CD4-positive, alpha-beta T cell (primary cell): ENCODE measurements at regions of chr3 and their contacts with region 1.

Region 1: DNA sequence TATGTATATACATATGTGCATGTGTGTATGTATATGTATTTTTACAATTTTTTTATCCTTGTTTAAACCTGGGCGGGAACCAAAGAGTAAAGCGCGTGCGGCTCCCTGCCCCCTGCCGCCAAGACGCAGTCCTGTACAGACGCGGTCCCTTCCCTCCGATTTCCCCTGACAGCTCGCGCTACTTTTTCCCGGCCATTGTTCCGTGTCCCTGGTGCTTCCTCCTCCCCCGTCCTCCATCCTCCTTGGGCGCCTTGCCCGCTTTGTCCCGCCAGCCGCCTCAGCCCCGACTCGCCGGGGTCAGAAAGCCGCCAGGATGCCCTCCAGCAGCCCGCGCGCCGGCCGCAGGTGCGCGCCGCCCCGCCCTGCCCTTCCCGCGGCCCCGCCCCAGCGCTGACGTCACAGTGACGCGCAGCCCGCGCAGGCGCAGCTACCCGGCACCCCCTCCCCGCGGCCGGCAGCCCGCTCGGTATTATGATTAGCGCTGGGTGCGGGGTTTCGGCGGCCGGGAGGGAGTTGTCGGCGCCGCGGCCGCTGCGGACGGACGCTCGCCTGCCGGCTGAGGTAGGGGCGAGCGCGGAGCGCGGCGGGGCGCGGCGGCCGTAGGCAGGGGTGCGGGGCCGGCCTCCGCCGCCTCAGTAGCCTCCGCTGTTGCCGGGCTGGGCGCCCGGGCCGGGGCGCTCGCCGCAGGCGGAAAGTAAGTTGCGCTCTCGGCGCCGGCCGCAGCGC is at the start of gene SNRK:
- DNase-seq: peak; percentile 84 to 97 (median 92)
- ATAC-seq: peak; percentile 79
- H3K4me3 ChIP-seq: peak within 1 kb of the TSS; percentile 70
- H3K4me3 Mint-ChIP-seq: peak within 1 kb of the TSS; percentile 100
- H3K27ac ChIP-seq: peak within 1 kb of the TSS; percentile 77 to 81
- H3K27ac Mint-ChIP-seq: peak within 1 kb of the TSS; percentile 100
- H3K4me1 ChIP-seq: peaks cover 32% of the 10 kb centered on the region
- H3K4me1 Mint-ChIP-seq: peaks cover 37% of the 10 kb centered on the region
- H3K27me3 ChIP-seq: no peaks in the 10 kb centered on the region
- H3K27me3 Mint-ChIP-seq: peaks cover 4% of the 10 kb centered on the region
- CTCF ChIP-seq: peak; percentile 56
- total RNA-seq, gene SNRK: 215 to 217 TPM

Region 2: GRCh38 chr3:42214565-42215283 is 1071.6 kb before region 1 on chr3:
- CTCF ChIA-PET with region 1: no interaction called
- POLR2A ChIA-PET with region 1: no interaction called
- intact Hi-C with region 1: no loop called
- DNase-seq: no peak
- ATAC-seq: no peak
- H3K4me3 ChIP-seq: no peak overlapping the region
- H3K4me3 Mint-ChIP-seq: peak overlapping the region; percentile 47
- H3K27ac ChIP-seq: peak overlapping the region; percentile 25 to 44
- H3K27ac Mint-ChIP-seq: peak overlapping the region; percentile 65
- H3K4me1 ChIP-seq: peaks cover 46% of the 10 kb centered on the region
- H3K4me1 Mint-ChIP-seq: peaks cover 62% of the 10 kb centered on the region
- H3K27me3 ChIP-seq: no peaks in the 10 kb centered on the region
- H3K27me3 Mint-ChIP-seq: no peaks in the 10 kb centered on the region
- CTCF ChIP-seq: no peak

Region 3: GRCh38 chr3:42855547-42856380 is 430.5 kb before region 1 on chr3:
- CTCF ChIA-PET with region 1: no interaction called
- POLR2A ChIA-PET with region 1: no interaction called
- intact Hi-C with region 1: no loop called
- DNase-seq: no peak
- ATAC-seq: no peak
- H3K4me3 ChIP-seq: no peak overlapping the region
- H3K4me3 Mint-ChIP-seq: no peak overlapping the region
- H3K27ac ChIP-seq: no peak overlapping the region
- H3K27ac Mint-ChIP-seq: no peak overlapping the region
- H3K4me1 ChIP-seq: no peaks in the 10 kb centered on the region
- H3K4me1 Mint-ChIP-seq: no peaks in the 10 kb centered on the region
- H3K27me3 ChIP-seq: no peaks in the 10 kb centered on the region
- H3K27me3 Mint-ChIP-seq: peaks cover 19% of the 10 kb centered on the region
- CTCF ChIP-seq: no peak

Region 4: GRCh38 chr3:42914771-42915515 is 371.3 kb before region 1 on chr3:
- CTCF ChIA-PET with region 1: no interaction called
- POLR2A ChIA-PET with region 1: no interaction called
- intact Hi-C with region 1: no loop called
- DNase-seq: no peak
- ATAC-seq: no peak
- H3K4me3 ChIP-seq: no peak overlapping the region
- H3K4me3 Mint-ChIP-seq: no peak overlapping the region
- H3K27ac ChIP-seq: no peak overlapping the region
- H3K27ac Mint-ChIP-seq: no peak overlapping the region
- H3K4me1 ChIP-seq: no peaks in the 10 kb centered on the region
- H3K4me1 Mint-ChIP-seq: no peaks in the 10 kb centered on the region
- H3K27me3 ChIP-seq: no peaks in the 10 kb centered on the region
- H3K27me3 Mint-ChIP-seq: no peaks in the 10 kb centered on the region
- CTCF ChIP-seq: no peak

Region 5: GRCh38 chr3:43180027-43180426 is 106.3 kb before region 1 on chr3:
- CTCF ChIA-PET with region 1: no interaction called
- POLR2A ChIA-PET with region 1: interaction called, 11 read pairs
- intact Hi-C with region 1: loop called in 1 of 2 experiments (anchors 5 kb)
- DNase-seq: peak in 11 of 14 experiments; percentile 14 to 87 (median 35)
- ATAC-seq: peak; percentile 86
- H3K4me3 ChIP-seq: peak overlapping the region; percentile 7
- H3K4me3 Mint-ChIP-seq: peak overlapping the region; percentile 71
- H3K27ac ChIP-seq: peak overlapping the region; percentile 49 to 77
- H3K27ac Mint-ChIP-seq: peak overlapping the region; percentile 91
- H3K4me1 ChIP-seq: peaks cover 54% of the 10 kb centered on the region
- H3K4me1 Mint-ChIP-seq: peaks cover 67% of the 10 kb centered on the region
- H3K27me3 ChIP-seq: no peaks in the 10 kb centered on the region
- H3K27me3 Mint-ChIP-seq: no peaks in the 10 kb centered on the region
- CTCF ChIP-seq: no peak

Region 6: GRCh38 chr3:43246976-43247375 is 39.3 kb before region 1 on chr3:
- CTCF ChIA-PET with region 1: no interaction called
- POLR2A ChIA-PET with region 1: interaction called, 8 read pairs
- intact Hi-C with region 1: loop called in 1 of 2 experiments (anchors 5 kb)
- DNase-seq: peak in 6 of 14 experiments; percentile 5 to 62 (median 23)
- ATAC-seq: peak; percentile 82
- H3K4me3 ChIP-seq: no peak overlapping the region
- H3K4me3 Mint-ChIP-seq: no peak overlapping the region
- H3K27ac ChIP-seq: peak overlapping the region; percentile 2 to 39
- H3K27ac Mint-ChIP-seq: peak overlapping the region; percentile 18
- H3K4me1 ChIP-seq: peaks cover 46% of the 10 kb centered on the region
- H3K4me1 Mint-ChIP-seq: peaks cover 66% of the 10 kb centered on the region
- H3K27me3 ChIP-seq: no peaks in the 10 kb centered on the region
- H3K27me3 Mint-ChIP-seq: no peaks in the 10 kb centered on the region
- CTCF ChIP-seq: no peak

Region 7: DNA sequence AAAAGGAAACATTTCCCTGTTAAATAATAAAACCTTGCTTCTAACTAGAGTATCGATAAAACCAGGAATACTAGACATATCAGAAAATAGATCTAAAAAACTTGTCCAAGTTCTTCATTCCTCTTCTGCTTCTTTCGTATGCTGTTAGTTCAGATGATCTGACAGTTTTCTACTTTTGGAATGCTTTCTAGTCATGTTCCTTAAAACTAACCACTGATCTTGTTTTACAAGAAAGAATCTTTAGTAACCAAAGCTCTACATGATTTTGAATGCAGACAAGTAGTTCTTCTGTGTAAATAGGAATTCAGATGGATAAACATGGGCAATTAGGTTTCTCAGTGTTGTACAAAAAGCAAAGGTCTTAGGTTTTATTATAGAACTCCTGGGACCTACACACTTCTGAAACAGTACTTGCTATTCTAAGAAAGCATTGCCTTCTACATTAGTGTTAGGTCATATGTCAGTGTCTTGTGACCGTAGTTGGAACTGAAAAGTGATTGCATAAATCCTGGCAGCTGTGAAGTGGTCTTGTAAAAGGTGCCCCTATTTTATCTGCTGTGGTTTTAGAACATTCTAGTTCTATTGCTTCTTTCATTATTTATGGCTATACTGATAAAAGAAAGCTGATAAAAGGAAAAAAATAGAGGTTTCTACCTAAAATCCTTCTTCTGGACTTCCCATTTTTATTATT is 40.8 kb after region 1 on chr3:
- CTCF ChIA-PET with region 1: no interaction called
- POLR2A ChIA-PET with region 1: interaction called, 3 read pairs
- intact Hi-C with region 1: loop called (anchors 5 kb)
- DNase-seq: no peak
- ATAC-seq: no peak
- H3K4me3 ChIP-seq: no peak overlapping the region
- H3K4me3 Mint-ChIP-seq: peak overlapping the region; percentile 52
- H3K27ac ChIP-seq: peak overlapping the region; percentile 4 to 9
- H3K27ac Mint-ChIP-seq: peak overlapping the region; percentile 49
- H3K4me1 ChIP-seq: peaks cover 38% of the 10 kb centered on the region
- H3K4me1 Mint-ChIP-seq: peaks cover 94% of the 10 kb centered on the region
- H3K27me3 ChIP-seq: no peaks in the 10 kb centered on the region
- H3K27me3 Mint-ChIP-seq: no peaks in the 10 kb centered on the region
- CTCF ChIP-seq: no peak

Region 8: GRCh38 chr3:43378066-43378935 is 92.0 kb after region 1 on chr3:
- CTCF ChIA-PET with region 1: no interaction called
- POLR2A ChIA-PET with region 1: no interaction called
- intact Hi-C with region 1: loop called (anchors 5 kb)
- DNase-seq: peak; percentile 62 to 86 (median 68)
- ATAC-seq: peak; percentile 99
- H3K4me3 ChIP-seq: no peak overlapping the region
- H3K4me3 Mint-ChIP-seq: no peak overlapping the region
- H3K27ac ChIP-seq: no peak overlapping the region
- H3K27ac Mint-ChIP-seq: peak overlapping the region; percentile 50
- H3K4me1 ChIP-seq: peaks cover 16% of the 10 kb centered on the region
- H3K4me1 Mint-ChIP-seq: peaks cover 17% of the 10 kb centered on the region
- H3K27me3 ChIP-seq: no peaks in the 10 kb centered on the region
- H3K27me3 Mint-ChIP-seq: no peaks in the 10 kb centered on the region
- CTCF ChIP-seq: peak; percentile 86

Region 9: GRCh38 chr3:43503067-43503728 is 216.9 kb after region 1 on chr3:
- CTCF ChIA-PET with region 1: no interaction called
- POLR2A ChIA-PET with region 1: interaction called, 3 read pairs
- intact Hi-C with region 1: loop called in 1 of 2 experiments (anchors 5 kb)
- DNase-seq: peak in 3 of 14 experiments; percentile 64 to 71 (median 67)
- ATAC-seq: peak; percentile 63
- H3K4me3 ChIP-seq: no peak overlapping the region
- H3K4me3 Mint-ChIP-seq: no peak overlapping the region
- H3K27ac ChIP-seq: no peak overlapping the region
- H3K27ac Mint-ChIP-seq: peak overlapping the region; percentile 31
- H3K4me1 ChIP-seq: peaks cover 26% of the 10 kb centered on the region
- H3K4me1 Mint-ChIP-seq: peaks cover 50% of the 10 kb centered on the region
- H3K27me3 ChIP-seq: no peaks in the 10 kb centered on the region
- H3K27me3 Mint-ChIP-seq: no peaks in the 10 kb centered on the region
- CTCF ChIP-seq: peak; percentile 68

Region 10: DNA sequence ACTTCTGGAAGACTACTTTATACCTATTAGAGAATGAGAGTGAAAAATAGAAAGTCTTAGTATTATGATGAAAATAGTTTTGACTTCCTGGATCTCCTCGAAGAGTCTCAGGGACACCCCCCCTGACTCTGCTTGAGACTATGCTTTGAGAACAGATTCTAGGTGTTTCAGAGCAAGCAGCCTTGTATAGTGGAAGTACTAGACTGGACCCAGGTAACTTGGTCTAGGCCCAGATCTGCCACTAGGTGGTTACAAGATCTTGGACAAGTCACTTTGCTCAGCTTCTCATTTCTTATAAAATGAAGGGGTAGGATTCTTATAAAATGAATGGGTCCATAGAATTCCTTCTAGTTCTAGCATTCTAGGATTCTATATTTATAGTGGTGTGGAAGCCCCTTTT is 413.6 kb after region 1 on chr3:
- CTCF ChIA-PET with region 1: no interaction called
- POLR2A ChIA-PET with region 1: no interaction called
- intact Hi-C with region 1: no loop called
- DNase-seq: peak in 2 of 14 experiments; percentile 28 to 37
- ATAC-seq: no peak
- H3K4me3 ChIP-seq: no peak overlapping the region
- H3K4me3 Mint-ChIP-seq: no peak overlapping the region
- H3K27ac ChIP-seq: no peak overlapping the region
- H3K27ac Mint-ChIP-seq: no peak overlapping the region
- H3K4me1 ChIP-seq: no peaks in the 10 kb centered on the region
- H3K4me1 Mint-ChIP-seq: no peaks in the 10 kb centered on the region
- H3K27me3 ChIP-seq: no peaks in the 10 kb centered on the region
- H3K27me3 Mint-ChIP-seq: no peaks in the 10 kb centered on the region
- CTCF ChIP-seq: no peak